AG04450 (cell line): ENCODE measurements at regions of chr10 and their contacts with region 1.

Region 1: GRCh38 chr10:112490545-112490944 is 43.5 kb downstream of the VTI1A start:
- DNase-seq: no peak
- H3K4me3 ChIP-seq: no peak overlapping the region
- H3K27ac ChIP-seq: no peak overlapping the region
- H3K27me3 ChIP-seq: no peaks in the 10 kb centered on the region
- CTCF ChIP-seq: no peak

Region 2: GRCh38 chr10:112454910-112455779 is 35.4 kb before region 1 on chr10:
- CTCF ChIA-PET with region 1: interaction called, 11 read pairs
- POLR2A ChIA-PET with region 1: no interaction called
- DNase-seq: no peak
- H3K4me3 ChIP-seq: no peak overlapping the region
- H3K27ac ChIP-seq: no peak overlapping the region
- H3K27me3 ChIP-seq: no peaks in the 10 kb centered on the region
- CTCF ChIP-seq: no peak